Heart left ventricle (tissue), 16 donors: ENCODE measurements at regions of chr2 and their contacts with region 1.

Region 1: GRCh38 chr2:134782792-134783191 is 55.6 kb upstream of the ACMSD start:
- DNase-seq: no peak
- ATAC-seq: peak in 2 of 4 donors; percentile 38 to 58
- H3K4me3 ChIP-seq: no peak overlapping the region
- H3K27ac ChIP-seq: no peak overlapping the region
- H3K4me1 ChIP-seq: peaks cover 0 to 30% (median 0%) of the 10 kb centered on the region in 12 donors
- H3K27me3 ChIP-seq: no peaks in the 10 kb centered on the region
- CTCF ChIP-seq: peak in 11 of 12 donors; percentile 14 to 41 (median 29)
- POLR2A ChIP-seq: no peak

Region 2: GRCh38 chr2:134460583-134460998 is 322.2 kb before region 1 on chr2:
- intact Hi-C with region 1: loop called in 4 of 10 experiments (anchors 10 kb)
- DNase-seq: peak; percentile 42 to 67 (median 64)
- ATAC-seq: peak; percentile 48 to 83 (median 74)
- H3K4me3 ChIP-seq: no peak overlapping the region
- H3K27ac ChIP-seq: no peak overlapping the region
- H3K4me1 ChIP-seq: peaks cover 0 to 3% (median 0%) of the 10 kb centered on the region in 12 donors
- H3K27me3 ChIP-seq: no peaks in the 10 kb centered on the region
- CTCF ChIP-seq: peak; percentile 45 to 67 (median 58)
- POLR2A ChIP-seq: no peak